ENCODE measurements at regions of chr3 and their contacts with region 1.

Region 1: GRCh38 chr3:160027541-160028195 is 39.0 kb downstream of the IL12A start:
- DNase-seq: peak; percentile 36
- H3K4me3 Mint-ChIP-seq: no peak overlapping the region
- H3K27ac Mint-ChIP-seq: peak overlapping the region; percentile 86
- H3K4me1 Mint-ChIP-seq: peaks cover 15% of the 10 kb centered on the region
- H3K27me3 Mint-ChIP-seq: no peaks in the 10 kb centered on the region

Region 2: GRCh38 chr3:160003520-160004128 is 24.0 kb before region 1 on chr3:
- CTCF ChIA-PET with region 1: interaction called, 10 read pairs
- POLR2A ChIA-PET with region 1: no interaction called
- intact Hi-C with region 1: no loop called
- DNase-seq: peak; percentile 62
- H3K4me3 Mint-ChIP-seq: no peak overlapping the region
- H3K27ac Mint-ChIP-seq: no peak overlapping the region
- H3K4me1 Mint-ChIP-seq: no peaks in the 10 kb centered on the region
- H3K27me3 Mint-ChIP-seq: no peaks in the 10 kb centered on the region

Region 3: DNA sequence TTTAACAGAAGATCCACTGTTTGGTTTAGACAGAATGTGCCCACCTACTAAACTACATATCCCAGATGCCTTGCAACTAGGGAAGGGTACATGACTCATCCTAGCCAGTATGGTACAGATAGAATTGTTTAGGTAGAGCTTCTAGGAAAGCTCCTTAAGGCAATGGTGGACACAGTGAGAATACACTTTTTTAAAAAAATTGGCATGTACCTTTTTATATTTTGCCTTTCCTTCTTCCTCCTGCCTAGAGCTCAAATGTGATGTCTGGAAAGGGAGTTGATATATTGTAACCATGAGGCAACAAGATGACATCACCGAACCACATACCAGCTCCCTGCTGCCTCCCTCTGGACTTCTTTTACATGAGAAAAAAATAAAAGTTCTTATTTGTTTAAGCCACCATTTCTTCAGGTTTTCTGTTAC is 183.1 kb after region 1 on chr3:
- CTCF ChIA-PET with region 1: interaction called, 7 read pairs
- POLR2A ChIA-PET with region 1: no interaction called
- intact Hi-C with region 1: loop called (anchors 5 kb)
- DNase-seq: no peak
- H3K4me3 Mint-ChIP-seq: no peak overlapping the region
- H3K27ac Mint-ChIP-seq: no peak overlapping the region
- H3K4me1 Mint-ChIP-seq: no peaks in the 10 kb centered on the region
- H3K27me3 Mint-ChIP-seq: peaks cover 12% of the 10 kb centered on the region

Region 4: GRCh38 chr3:160343132-160343531 is 315.5 kb after region 1 on chr3:
- CTCF ChIA-PET with region 1: interaction called, 5 read pairs
- POLR2A ChIA-PET with region 1: no interaction called
- intact Hi-C with region 1: loop called (anchors 1 kb)
- DNase-seq: no peak
- H3K4me3 Mint-ChIP-seq: no peak overlapping the region
- H3K27ac Mint-ChIP-seq: no peak overlapping the region
- H3K4me1 Mint-ChIP-seq: no peaks in the 10 kb centered on the region
- H3K27me3 Mint-ChIP-seq: no peaks in the 10 kb centered on the region

Region 5: DNA sequence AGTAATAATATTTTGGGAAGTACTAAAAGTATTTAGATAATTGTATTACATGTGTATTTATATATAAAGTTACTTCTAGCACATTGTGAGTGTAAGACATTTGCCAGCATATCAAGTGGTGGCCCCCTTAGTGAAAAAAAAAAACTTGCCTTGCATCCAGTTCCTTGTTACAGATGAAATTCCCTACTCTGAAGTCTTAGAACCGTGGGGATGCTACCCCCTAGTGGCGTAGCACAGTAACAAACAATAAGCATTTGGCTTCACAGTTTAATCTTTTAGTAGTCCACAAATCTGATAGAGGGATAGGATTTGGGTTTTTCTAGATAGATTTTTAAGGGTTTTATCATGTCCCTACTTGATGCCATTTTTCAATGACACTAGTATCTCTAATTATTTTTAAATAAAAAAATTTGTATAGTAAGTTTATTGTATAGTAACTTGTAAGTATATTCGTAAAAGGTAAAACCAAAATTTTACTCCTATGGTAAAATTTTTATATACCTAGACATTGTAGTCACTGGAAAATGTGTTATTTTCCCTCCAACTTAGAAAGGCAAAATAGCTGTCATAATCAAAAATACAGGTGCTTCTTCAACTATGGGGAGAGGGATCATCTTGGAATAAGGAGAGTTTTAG is 386.1 kb after region 1 on chr3:
- CTCF ChIA-PET with region 1: interaction called, 30 read pairs
- POLR2A ChIA-PET with region 1: no interaction called
- intact Hi-C with region 1: loop called (anchors 1 kb)
- DNase-seq: peak; percentile 71
- H3K4me3 Mint-ChIP-seq: no peak overlapping the region
- H3K27ac Mint-ChIP-seq: peak overlapping the region; percentile 33
- H3K4me1 Mint-ChIP-seq: peaks cover 16% of the 10 kb centered on the region
- H3K27me3 Mint-ChIP-seq: no peaks in the 10 kb centered on the region

Region 6: GRCh38 chr3:160486459-160486869 is 458.8 kb after region 1 on chr3:
- CTCF ChIA-PET with region 1: interaction called, 3 read pairs
- POLR2A ChIA-PET with region 1: no interaction called
- intact Hi-C with region 1: loop called (anchors 1 kb)
- DNase-seq: no peak
- H3K4me3 Mint-ChIP-seq: no peak overlapping the region
- H3K27ac Mint-ChIP-seq: no peak overlapping the region
- H3K4me1 Mint-ChIP-seq: peaks cover 2% of the 10 kb centered on the region
- H3K27me3 Mint-ChIP-seq: no peaks in the 10 kb centered on the region

Region 7: GRCh38 chr3:161220850-161221753 is 1193.4 kb after region 1 on chr3 and contains the start of gene NMD3:
- CTCF ChIA-PET with region 1: no interaction called
- POLR2A ChIA-PET with region 1: no interaction called
- intact Hi-C with region 1: loop called (anchors 5 kb)
- DNase-seq: peak; percentile 96
- H3K4me3 Mint-ChIP-seq: peak within 1 kb of the TSS; percentile 87
- H3K27ac Mint-ChIP-seq: peak within 1 kb of the TSS; percentile 84
- H3K4me1 Mint-ChIP-seq: peaks cover 23% of the 10 kb centered on the region
- H3K27me3 Mint-ChIP-seq: peaks cover 3% of the 10 kb centered on the region
- total RNA-seq, gene NMD3: 65.8 to 70.8 TPM

Measured in activated CD4-positive, alpha-beta memory T cell treated with anti-CD3 and anti-CD28 coated beads for 36 hours (primary cell).